Activated CD4-positive, alpha-beta T cell treated with anti-CD3 and anti-CD28 coated beads, Interleukin-2, amount 10 ng/mL, durations not matched to agents 24 days and 14 days (primary cell): ENCODE measurements at regions of chrX and their contacts with region 1.

Region 1: DNA sequence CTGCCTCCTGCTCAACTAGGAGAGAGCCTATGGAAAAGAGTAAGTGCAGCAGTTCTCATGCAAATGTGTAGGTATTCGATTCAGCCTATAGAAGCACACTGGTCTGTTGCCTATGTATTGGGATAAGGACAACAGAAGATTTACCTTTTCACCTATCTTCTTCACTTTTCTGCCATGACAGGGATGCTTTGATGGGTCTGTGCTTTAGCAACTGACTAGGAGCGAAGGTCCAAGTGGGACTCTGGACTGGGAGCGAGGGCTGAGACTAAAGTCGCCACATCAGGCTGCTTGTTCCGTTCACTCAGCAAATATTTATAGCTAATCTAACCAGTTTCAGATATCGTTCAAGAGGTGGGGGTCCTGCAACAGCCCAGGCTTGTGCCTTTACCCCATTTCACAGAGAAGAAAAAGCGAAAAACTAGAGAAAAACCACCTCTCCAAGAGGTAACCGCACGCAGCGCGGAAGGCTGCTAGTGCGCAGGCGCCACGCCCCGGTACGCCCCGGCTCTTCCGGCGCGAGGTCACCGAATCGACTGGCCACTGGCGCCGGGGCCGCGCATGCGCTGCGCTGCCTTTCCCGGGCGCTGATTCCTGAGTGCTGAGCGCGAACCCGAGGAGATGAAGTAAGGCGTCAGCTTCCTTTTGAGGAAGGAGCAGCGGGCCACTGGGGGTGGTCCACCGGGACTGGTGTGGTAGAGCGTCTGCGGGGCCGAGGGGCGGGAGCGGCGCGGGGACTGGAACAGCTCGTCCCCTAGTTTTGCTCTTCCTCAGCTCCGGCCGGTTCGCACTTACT is at the start of gene RBMX2:
- DNase-seq: peak; percentile 92
- H3K4me3 Mint-ChIP-seq: peak within 1 kb of the TSS; percentile 92
- H3K27ac Mint-ChIP-seq: peak within 1 kb of the TSS; percentile 92
- H3K4me1 Mint-ChIP-seq: peaks cover 9% of the 10 kb centered on the region
- H3K27me3 Mint-ChIP-seq: peaks cover 9% of the 10 kb centered on the region
- total RNA-seq, gene RBMX2: 27.4 and 28.1 TPM in 2 replicates

Region 2: GRCh38 chrX:129843459-129844306 is 557.9 kb before region 1 on chrX and contains the start of gene ZDHHC9:
- intact Hi-C with region 1: loop called (anchors 5 kb)
- DNase-seq: peak; percentile 95
- H3K4me3 Mint-ChIP-seq: peak within 1 kb of the TSS; percentile 91
- H3K27ac Mint-ChIP-seq: peak within 1 kb of the TSS; percentile 89
- H3K4me1 Mint-ChIP-seq: peaks cover 24% of the 10 kb centered on the region
- H3K27me3 Mint-ChIP-seq: peaks cover 9% of the 10 kb centered on the region
- total RNA-seq, gene ZDHHC9: 13.4 and 14.6 TPM in 2 replicates

Region 3: DNA sequence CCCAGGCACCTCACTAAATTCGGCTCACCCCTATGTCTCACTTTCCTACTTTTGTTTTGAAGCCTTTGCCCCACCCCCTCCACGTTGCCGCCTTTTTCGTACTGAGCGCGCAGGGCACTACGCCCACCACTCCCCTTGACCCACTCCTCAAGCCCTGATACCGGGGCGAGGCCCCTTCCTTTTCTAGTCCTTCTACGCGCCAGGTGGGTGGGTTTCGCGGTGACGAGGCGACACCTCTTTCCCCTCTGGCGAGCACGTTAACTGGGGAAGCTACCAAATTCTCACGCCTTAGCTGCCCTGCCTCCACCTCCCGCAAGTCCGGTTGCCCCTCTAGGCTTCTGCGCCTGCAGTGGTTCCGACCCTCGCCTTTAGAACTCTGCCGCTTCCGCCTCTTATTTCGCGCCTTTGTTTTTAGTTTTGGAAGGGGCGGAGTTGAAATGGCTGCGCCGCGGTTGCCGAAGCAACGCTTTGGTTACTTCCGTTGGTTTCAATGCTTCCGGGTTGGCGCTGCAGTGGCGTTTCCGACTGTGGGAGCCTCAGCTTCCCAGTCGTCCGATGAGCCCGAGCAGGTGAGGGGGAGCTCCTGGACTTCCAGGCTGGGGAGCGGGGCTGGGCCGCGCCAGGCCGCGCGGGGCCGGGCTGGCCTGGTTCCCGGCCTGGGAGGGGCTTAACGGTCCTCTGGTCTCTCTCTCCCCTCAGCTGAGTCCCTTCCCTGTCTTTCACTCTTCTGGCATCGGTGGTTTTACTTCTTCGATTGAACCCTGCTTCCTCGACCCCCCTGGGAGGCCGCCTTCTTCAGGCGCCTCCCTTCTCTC is 62.0 kb before region 1 on chrX and contains the start of gene SLC25A14:
- intact Hi-C with region 1: loop called (anchors 5 kb)
- DNase-seq: peak; percentile 92
- H3K4me3 Mint-ChIP-seq: peak within 1 kb of the TSS; percentile 95
- H3K27ac Mint-ChIP-seq: peak within 1 kb of the TSS; percentile 95
- H3K4me1 Mint-ChIP-seq: peaks cover 16% of the 10 kb centered on the region
- H3K27me3 Mint-ChIP-seq: no peaks in the 10 kb centered on the region
- total RNA-seq, gene SLC25A14: 9.1 and 11.9 TPM in 2 replicates